HepG2 (cell line): ENCODE measurements at regions of chr12 and their contacts with region 1.

Region 1: DNA sequence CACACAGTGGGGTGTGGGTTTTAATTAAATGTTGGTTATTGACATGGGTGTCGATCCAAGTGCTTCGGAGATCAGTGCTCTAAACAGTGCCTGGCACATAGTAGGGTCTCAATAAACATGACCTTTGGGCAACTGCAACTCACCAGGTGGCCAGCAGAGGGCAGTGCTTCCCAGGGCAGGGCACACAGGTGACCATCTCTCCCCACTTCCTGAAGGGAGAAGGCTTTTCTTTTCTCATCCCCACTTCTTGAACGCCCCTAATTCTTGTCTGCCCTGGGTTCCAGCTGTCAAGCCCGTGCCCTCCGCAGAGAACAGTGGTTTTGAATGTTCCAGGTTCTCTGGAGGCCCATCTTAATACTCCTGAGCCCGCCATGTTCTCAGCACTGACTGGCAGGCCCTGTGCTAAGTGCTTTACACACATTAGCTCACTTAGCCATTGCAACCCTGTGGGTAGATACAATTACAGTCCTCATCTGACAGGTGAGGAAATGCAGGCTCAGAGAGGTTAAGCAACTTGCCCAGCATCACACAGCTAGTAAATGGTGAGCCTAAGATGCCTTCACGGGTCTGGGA is 16.3 kb downstream of the RAPGEF3 start:
- DNase-seq: peak; percentile 19
- ATAC-seq: no peak
- H3K4me3 ChIP-seq: no peak overlapping the region
- H3K27ac ChIP-seq: no peak overlapping the region
- H3K4me1 ChIP-seq: peaks cover 24% of the 10 kb centered on the region
- H3K27me3 ChIP-seq: peaks cover 9 to 49% of the 10 kb centered on the region in 2 experiments
- CTCF ChIP-seq: peak; percentile 89
- EP300 ChIP-seq: no peak
- POLR2A ChIP-seq: no peak
- RAD21 ChIP-seq: peak; percentile 72

Region 2: DNA sequence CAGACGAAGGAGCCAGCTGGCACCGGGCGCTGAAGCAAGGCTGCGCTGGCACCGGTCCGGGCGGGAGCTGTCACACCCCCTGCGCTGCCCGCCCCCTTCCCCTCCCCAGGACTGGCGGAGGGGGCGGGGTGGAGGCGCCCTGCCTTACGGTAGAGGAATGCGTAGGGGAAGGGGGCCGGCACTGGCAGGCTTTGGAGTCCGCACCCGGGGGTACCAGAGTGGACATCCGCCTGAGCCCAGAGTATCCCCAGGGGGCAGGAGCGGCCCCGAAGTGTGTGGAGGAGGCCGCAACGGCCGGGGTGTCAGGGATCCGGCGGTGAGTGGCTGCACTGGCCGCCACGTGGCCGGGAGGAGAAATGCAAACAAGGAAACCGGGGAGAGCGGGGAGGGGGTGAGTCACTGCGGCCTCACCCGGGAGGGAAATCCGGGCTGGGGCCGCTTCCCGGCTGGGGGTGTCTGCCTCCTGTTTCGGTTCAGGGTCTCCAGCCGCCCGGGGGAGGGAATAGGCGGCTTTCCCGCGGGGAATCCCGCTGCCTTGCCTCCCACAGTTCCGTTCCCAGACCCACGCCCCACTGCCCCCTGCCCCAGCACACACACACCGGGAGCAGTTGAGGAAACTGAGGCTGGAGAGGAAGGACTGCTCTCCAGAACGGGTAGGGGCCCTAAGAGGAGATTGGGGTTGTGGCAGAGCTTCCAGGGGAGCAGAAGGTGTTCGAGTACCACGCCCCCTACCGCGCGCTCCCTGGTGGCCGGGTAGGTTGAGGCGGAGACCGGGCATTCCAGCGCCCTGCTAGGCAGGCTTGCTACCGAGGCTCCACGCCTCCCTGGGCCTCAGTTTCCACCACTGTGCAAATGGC is 16.7 kb after region 1 on chr12 and contains the start of gene RAPGEF3:
- CTCF ChIA-PET with region 1: interaction called, 14 read pairs
- POLR2A ChIA-PET with region 1: no interaction called
- in situ Hi-C with region 1: no loop called
- intact Hi-C with region 1: no loop called
- DNase-seq: peak; percentile 49
- ATAC-seq: peak; percentile 90
- H3K4me3 ChIP-seq: peak within 1 kb of the TSS; percentile 49 to 75 (median 50); a peak in 5 of 6 replicates
- H3K27ac ChIP-seq: no peak within 1 kb of the TSS
- H3K4me1 ChIP-seq: peaks cover 17% of the 10 kb centered on the region; the same call in 1 of the 2 replicates
- H3K27me3 ChIP-seq: peaks cover 3 to 50% of the 10 kb centered on the region in 2 experiments; a peak in 4 of 5 replicates
- CTCF ChIP-seq: peak; percentile 61
- EP300 ChIP-seq: no peak
- POLR2A ChIP-seq: no peak
- RAD21 ChIP-seq: 0 out of 2 replicates have a peak, but pooled peaks have one; percentile 32
- total RNA-seq, gene RAPGEF3: 0.07 TPM in 1 of 2 replicates, not detected in the other

Region 3: DNA sequence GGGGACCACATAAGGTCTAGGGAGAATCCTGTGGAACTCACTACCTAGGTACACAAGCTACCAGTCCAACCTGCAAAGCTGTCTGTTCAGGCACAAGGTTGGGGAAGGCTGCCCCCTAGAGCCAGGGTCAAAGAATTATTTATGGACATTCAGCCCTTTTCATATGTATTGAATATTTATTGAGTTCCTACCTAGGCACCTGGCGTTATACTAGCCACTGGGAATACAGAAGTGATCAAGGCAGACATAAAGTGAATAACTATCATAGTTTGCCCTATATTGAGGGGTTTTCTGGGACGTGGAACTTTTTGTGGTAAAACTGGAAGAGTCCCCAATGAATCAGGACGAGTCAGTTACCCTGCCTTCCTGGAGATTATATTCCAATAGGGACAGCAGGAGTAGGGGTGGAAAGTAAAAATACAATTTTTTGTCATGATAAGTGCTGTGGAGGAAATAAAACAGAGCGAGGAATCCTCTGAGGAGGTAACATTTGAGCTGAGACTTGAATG is 24.9 kb after region 1 on chr12:
- CTCF ChIA-PET with region 1: interaction called, 16 read pairs
- POLR2A ChIA-PET with region 1: no interaction called
- in situ Hi-C with region 1: no loop called
- intact Hi-C with region 1: no loop called
- DNase-seq: peak; percentile 53
- ATAC-seq: peak; percentile 39
- H3K4me3 ChIP-seq: no peak overlapping the region
- H3K27ac ChIP-seq: no peak overlapping the region
- H3K4me1 ChIP-seq: peaks cover 39% of the 10 kb centered on the region
- H3K27me3 ChIP-seq: peaks cover 4 to 19% of the 10 kb centered on the region in 2 experiments; a peak in 3 of 5 replicates
- CTCF ChIP-seq: peak; percentile 68
- EP300 ChIP-seq: no peak
- POLR2A ChIP-seq: no peak
- RAD21 ChIP-seq: no peak

Region 4: GRCh38 chr12:47779301-47779942 is 37.1 kb after region 1 on chr12:
- CTCF ChIA-PET with region 1: interaction called, 37 read pairs
- POLR2A ChIA-PET with region 1: no interaction called
- in situ Hi-C with region 1: loop called (anchors 5 kb)
- intact Hi-C with region 1: loop called (anchors 1 kb)
- DNase-seq: peak; percentile 69
- ATAC-seq: peak; percentile 87
- H3K4me3 ChIP-seq: no peak overlapping the region
- H3K27ac ChIP-seq: no peak overlapping the region
- H3K4me1 ChIP-seq: peaks cover 23% of the 10 kb centered on the region
- H3K27me3 ChIP-seq: no peaks in the 10 kb centered on the region
- CTCF ChIP-seq: peak; percentile 93
- EP300 ChIP-seq: no peak
- POLR2A ChIP-seq: no peak
- RAD21 ChIP-seq: peak; percentile 90

Region 5: GRCh38 chr12:47988073-47989022 is 246.0 kb after region 1 on chr12:
- CTCF ChIA-PET with region 1: no interaction called
- POLR2A ChIA-PET with region 1: no interaction called
- in situ Hi-C with region 1: no loop called
- intact Hi-C with region 1: no loop called
- DNase-seq: no peak
- ATAC-seq: no peak
- H3K4me3 ChIP-seq: no peak overlapping the region
- H3K27ac ChIP-seq: no peak overlapping the region
- H3K4me1 ChIP-seq: no peaks in the 10 kb centered on the region
- H3K27me3 ChIP-seq: no peaks in the 10 kb centered on the region; a peak in 1 of 5 replicates
- CTCF ChIP-seq: no peak
- EP300 ChIP-seq: no peak
- POLR2A ChIP-seq: no peak
- RAD21 ChIP-seq: no peak